Ovary (tissue), 10 donors: ENCODE measurements at regions of chr11 and their contacts with region 1.

Region 1: GRCh38 chr11:108647701-108648527 is 17.0 kb upstream of the DDX10 start:
- DNase-seq: peak; percentile 35 to 64 (median 60)
- H3K4me3 ChIP-seq: no peak overlapping the region
- H3K27ac ChIP-seq: no peak overlapping the region
- H3K4me1 ChIP-seq: no peaks in the 10 kb centered on the region
- H3K27me3 ChIP-seq: no peaks in the 10 kb centered on the region
- CTCF ChIP-seq: peak; percentile 25 to 52 (median 37)
- EP300 ChIP-seq: no peak
- POLR2A ChIP-seq: no peak

Region 2: DNA sequence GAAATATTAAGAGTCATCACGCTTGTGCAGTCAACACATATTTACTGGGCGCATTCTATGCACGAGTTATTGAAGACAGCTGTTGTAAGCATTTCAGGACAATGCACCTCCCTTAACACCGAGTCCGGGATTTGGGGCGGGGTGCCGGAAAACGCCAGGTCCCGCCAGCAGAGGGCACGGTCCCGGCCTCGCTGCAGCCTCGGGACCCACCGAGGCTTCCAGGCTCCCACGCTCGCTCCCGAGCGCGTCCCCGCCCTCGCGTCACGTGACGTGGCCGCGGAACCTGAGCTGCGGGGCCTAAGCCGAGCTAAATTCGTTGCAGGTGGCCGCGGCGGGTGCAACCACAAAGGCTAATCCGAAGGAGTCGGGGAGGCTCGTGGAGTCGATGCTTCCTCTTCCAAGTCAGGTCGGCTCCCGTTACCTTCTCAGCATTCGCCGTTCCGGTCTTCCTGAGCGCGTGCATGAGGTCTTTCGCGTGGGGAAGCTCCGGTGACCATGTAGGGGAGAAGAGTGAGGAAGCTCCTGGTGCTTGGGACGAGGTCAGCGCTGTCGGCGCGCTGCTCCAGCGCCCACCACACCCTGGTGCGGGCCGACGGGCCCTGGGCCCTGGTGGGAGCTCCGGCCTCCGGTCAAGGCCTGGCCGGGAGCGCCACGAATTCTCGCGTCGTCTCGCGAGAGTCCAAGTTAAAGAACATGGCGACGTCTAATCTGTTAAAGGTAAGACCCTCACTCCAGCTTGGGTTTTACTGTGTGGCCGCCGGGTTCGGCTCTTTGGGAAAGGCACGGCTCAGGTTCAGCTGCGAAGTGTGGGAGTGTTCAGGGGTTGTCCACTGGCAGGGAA is 639.0 kb before region 1 on chr11 and contains the start of gene CUL5:
- intact Hi-C with region 1: loop called in 1 of 4 experiments (anchors 5 kb)
- DNase-seq: peak; percentile 90 to 95 (median 93)
- H3K4me3 ChIP-seq: peak within 1 kb of the TSS; percentile 97
- H3K27ac ChIP-seq: peak within 1 kb of the TSS; percentile 92 to 94
- H3K4me1 ChIP-seq: peaks cover 2% of the 10 kb centered on the region
- H3K27me3 ChIP-seq: no peaks in the 10 kb centered on the region
- CTCF ChIP-seq: peak; percentile 85 to 92 (median 87)
- EP300 ChIP-seq: no peak
- POLR2A ChIP-seq: peak; percentile 44
- total RNA-seq, gene CUL5: 18.4 to 34.4 (median 31.7) TPM